ENCODE measurements at regions of chr17 and their contacts with region 1.

Region 1: DNA sequence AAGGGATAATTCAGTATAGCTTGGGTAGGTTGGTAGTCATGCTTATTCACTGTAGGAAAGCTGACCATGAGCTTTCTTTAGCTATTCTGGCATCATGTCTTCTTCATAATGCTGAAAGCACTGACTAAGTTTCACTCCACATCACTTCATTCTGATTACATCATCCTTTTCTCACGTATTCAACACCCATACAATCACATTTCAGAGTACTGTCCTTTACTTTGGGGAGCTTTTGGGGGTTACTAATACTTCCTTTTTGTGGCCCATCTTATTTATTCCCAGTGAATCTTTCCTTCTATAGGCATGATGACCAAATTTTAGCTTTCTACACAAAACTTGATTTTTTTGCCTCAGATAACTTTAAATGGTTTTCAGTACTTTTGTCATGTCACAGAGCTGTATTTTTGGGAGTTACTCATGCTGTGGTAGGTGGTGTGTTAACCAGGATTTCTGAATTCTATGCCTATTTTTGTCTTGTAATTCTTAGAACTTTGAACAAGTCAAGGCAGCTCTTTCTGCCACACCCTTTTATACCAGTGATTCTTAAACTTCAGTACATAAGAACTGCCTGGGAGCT is 23.5 kb downstream of the TADA2A start:
- DNase-seq: no peak
- H3K4me3 Mint-ChIP-seq: peak overlapping the region; percentile 41
- H3K27ac Mint-ChIP-seq: peak overlapping the region; percentile 99
- H3K4me1 Mint-ChIP-seq: peaks cover 58% of the 10 kb centered on the region
- H3K27me3 Mint-ChIP-seq: no peaks in the 10 kb centered on the region

Region 2: GRCh38 chr17:37406635-37407461 is 23.3 kb before region 1 on chr17 and contains the starts of genes ACACA and TADA2A:
- CTCF ChIA-PET with region 1: interaction called, 11 read pairs
- POLR2A ChIA-PET with region 1: interaction called, 91 read pairs
- DNase-seq: peak; percentile 83
- H3K4me3 Mint-ChIP-seq: peak within 1 kb of the TSS; percentile 98
- H3K27ac Mint-ChIP-seq: peak within 1 kb of the TSS; percentile 93
- H3K4me1 Mint-ChIP-seq: peaks cover 72% of the 10 kb centered on the region
- H3K27me3 Mint-ChIP-seq: no peaks in the 10 kb centered on the region
- total RNA-seq, gene ACACA: 38.6 to 46.3 TPM
- total RNA-seq, gene TADA2A: 42.5 to 43.0 TPM

Region 3: DNA sequence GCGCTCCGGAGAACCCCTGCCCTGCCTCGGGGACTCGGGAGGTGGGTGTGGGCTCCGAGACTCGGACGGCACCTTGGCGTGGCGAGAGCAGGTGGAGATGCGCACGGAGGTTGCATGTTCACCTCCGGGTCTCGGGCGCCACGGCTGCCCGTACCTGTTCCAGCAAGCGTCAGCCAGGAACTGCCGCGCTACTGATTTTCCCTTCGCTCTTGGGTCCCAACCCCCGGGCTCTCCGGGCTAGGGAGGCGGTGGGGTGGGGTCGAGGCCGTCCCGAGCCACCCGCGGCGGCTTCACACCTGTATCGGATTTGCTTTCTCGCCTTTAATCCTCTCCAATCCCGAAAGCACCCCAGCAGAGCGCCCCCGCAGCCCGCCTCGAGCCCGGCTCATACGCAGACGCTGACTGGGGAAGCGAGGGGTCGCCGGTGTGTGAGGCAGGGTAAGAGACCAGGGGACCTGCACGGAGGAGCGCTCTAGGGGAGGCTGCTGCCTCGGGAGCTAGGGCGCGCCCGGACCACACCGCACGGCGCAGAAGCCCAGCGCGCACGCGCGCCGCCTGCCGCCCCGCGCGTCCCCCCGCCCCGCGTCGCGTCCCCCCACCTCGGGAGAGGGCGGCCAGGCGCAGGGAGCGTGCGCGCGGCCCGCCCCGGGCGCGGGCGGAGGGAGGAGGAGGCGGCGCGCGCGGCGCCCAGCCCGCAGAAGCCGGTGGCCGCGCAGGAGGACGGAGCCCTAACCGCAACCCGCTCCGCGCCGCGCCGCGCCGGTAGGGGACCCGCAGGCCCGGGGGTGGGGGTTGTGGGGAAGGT is 59.3 kb after region 1 on chr17 and contains the start of gene DUSP14:
- CTCF ChIA-PET with region 1: interaction called, 3 read pairs
- POLR2A ChIA-PET with region 1: interaction called, 15 read pairs
- DNase-seq: peak; percentile 83
- H3K4me3 Mint-ChIP-seq: peak within 1 kb of the TSS; percentile 91
- H3K27ac Mint-ChIP-seq: peak within 1 kb of the TSS; percentile 84
- H3K4me1 Mint-ChIP-seq: peaks cover 39% of the 10 kb centered on the region
- H3K27me3 Mint-ChIP-seq: no peaks in the 10 kb centered on the region
- total RNA-seq, gene DUSP14: 14.6 to 16.3 TPM

Measured in activated CD4-positive, alpha-beta memory T cell treated with anti-CD3 and anti-CD28 coated beads, Interleukin-2, amount 10 ng/mL, durations not matched to agents 7 days and 5 days (primary cell).